Stomach (tissue), 19 donors: ENCODE measurements at regions of chr15 and their contacts with region 1.

Region 1: DNA sequence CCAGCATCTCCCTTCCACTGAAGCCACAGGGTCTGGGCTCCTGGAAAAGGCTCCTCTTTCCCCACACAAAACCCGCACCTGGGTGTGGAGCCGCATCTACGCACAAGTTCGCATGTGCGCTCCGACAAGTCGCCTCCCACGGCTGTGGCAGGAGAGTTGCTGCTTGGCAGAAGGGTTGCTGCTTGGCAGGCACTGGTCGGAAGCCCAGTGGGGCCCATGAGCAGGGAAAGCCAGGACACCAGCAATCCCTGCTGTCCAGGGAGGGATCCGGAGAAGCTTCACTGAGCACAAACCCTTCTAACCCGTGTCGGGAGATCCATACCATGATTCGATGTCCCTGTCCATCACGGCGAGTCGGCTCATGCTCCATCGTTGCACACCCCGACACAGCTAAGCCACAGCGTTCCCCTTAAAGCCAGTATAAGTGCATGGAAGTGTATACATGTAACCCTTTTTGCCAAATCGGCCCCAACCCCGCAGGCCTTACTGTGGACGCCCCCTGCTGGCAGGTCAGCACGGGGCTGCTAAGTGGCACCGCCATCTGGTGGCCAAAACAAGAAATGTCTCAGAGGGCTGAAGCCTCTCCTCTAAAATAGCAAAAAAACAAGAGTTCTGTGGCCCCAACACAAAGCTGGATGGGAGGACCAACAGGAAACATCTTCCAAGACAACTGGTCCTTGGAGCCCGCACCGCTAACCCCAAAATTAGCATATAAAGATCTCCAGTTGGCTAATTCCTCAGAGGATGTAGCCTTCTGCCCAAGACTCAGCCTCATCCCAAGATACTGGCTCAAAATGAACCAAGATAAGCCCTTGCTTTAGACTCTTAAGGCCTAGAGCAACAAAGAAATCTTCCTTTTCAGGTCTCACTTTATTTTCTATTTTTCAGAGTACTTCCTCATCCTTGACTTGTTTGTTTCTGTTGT is 8.3 kb downstream of the ANKRD63 start:
- DNase-seq: peak; percentile 87 to 91
- H3K4me3 ChIP-seq: no peak overlapping the region
- H3K27ac ChIP-seq: no peak overlapping the region
- H3K4me1 ChIP-seq: peaks cover 3 to 8% (median 6%) of the 10 kb centered on the region in 4 donors
- H3K27me3 ChIP-seq: peaks cover 2 to 23% (median 8%) of the 10 kb centered on the region in 3 donors
- CTCF ChIP-seq: peak in 6 of 7 experiments; percentile 49 to 100 (median 100)
- EP300 ChIP-seq: no peak
- POLR2A ChIP-seq: no peak

Region 2: GRCh38 chr15:40044717-40045571 is 229.7 kb before region 1 on chr15:
- intact Hi-C with region 1: loop called (anchors 5 kb)
- DNase-seq: peak; percentile 91 to 96
- H3K4me3 ChIP-seq: peak overlapping the region in 1 of 4 donors; percentile 6
- H3K27ac ChIP-seq: peak overlapping the region in 3 of 5 donors; percentile 40 to 76 (median 65)
- H3K4me1 ChIP-seq: peaks cover 15 to 58% (median 42%) of the 10 kb centered on the region in 4 donors
- H3K27me3 ChIP-seq: no peaks in the 10 kb centered on the region
- CTCF ChIP-seq: peak in 5 of 7 experiments; percentile 75 to 93 (median 89)
- EP300 ChIP-seq: no peak
- POLR2A ChIP-seq: no peak

Region 3: GRCh38 chr15:40219801-40220200 is 54.8 kb before region 1 on chr15:
- intact Hi-C with region 1: loop called (anchors 2 kb)
- DNase-seq: no peak
- H3K4me3 ChIP-seq: no peak overlapping the region
- H3K27ac ChIP-seq: no peak overlapping the region
- H3K4me1 ChIP-seq: peaks cover 0 to 3% (median 0%) of the 10 kb centered on the region in 4 donors
- H3K27me3 ChIP-seq: no peaks in the 10 kb centered on the region
- CTCF ChIP-seq: no peak
- EP300 ChIP-seq: no peak
- POLR2A ChIP-seq: no peak

Region 4: DNA sequence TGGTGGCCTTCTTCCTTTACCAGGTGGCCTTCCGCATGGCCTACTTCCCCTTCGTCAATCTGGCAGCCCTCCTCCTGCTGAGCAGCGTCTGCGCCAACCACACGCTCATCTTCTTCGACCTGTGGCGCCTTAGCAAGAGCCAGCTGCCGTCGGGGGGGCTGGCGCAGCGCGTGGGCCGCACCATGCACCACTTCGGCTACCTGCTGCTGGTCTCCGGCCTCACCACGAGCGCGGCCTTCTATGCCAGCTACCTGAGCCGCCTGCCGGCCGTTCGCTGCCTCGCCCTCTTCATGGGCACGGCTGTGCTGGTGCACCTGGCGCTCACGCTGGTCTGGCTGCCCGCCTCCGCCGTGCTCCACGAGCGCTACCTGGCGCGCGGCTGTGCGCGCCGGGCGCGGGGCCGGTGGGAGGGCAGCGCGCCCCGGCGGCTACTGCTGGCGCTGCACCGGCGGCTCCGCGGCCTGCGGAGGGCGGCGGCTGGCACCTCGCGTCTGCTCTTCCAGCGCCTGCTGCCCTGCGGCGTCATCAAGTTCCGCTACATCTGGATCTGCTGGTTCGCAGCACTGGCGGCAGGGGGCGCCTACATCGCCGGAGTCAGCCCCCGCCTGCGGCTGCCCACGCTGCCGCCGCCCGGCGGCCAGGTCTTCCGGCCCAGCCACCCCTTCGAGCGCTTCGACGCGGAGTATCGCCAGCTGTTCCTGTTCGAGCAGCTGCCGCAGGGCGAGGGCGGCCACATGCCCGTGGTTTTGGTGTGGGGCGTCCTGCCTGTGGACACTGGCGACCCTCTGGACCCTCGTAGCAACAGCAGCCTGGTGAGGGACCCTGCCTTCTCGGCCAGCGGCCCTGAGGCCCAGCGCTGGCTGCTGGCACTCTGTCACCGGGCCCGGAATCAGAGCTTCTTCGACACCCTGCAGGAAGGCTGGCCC is 93.3 kb after region 1 on chr15:
- intact Hi-C with region 1: no loop called
- DNase-seq: peak; percentile 93 to 97
- H3K4me3 ChIP-seq: peak overlapping the region; percentile 39 to 48 (median 44)
- H3K27ac ChIP-seq: peak overlapping the region; percentile 70 to 81 (median 76)
- H3K4me1 ChIP-seq: peaks cover 17 to 25% (median 23%) of the 10 kb centered on the region in 4 donors
- H3K27me3 ChIP-seq: no peaks in the 10 kb centered on the region
- CTCF ChIP-seq: peak in 5 of 7 experiments; percentile 45 to 90 (median 74)
- EP300 ChIP-seq: no peak
- POLR2A ChIP-seq: no peak

Region 5: DNA sequence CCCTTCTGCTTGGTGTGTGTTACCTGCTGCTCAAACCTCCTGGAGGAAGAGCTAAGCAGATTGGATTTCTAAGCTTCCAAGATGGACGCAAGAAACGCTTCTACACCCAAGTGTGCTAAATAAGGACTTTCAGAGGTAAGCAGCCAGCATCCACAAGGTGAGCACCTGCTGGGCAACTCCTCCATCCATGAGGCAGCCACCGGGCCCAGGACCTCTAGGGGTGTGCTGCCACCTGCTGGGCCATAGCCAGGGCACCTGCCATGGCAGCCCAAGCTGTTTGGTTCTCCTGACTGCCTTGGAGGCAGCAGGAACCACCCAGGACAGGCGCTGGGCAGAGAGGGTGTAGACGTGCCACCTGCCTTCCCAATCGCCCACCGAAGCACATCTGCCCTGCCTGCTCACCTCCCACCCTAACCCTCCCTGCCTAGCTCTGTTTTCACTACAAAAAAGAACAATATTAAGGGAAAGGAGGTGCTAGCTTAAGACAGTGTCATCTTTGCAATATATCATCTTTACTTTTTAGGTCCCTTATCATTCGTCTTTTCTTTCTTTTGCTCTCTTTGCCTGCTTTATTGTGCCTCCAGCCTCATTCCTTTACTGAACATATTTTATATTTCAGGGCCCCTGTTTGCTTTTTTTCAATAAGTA is 508.1 kb after region 1 on chr15:
- intact Hi-C with region 1: no loop called
- DNase-seq: peak; percentile 90 to 92
- H3K4me3 ChIP-seq: no peak overlapping the region
- H3K27ac ChIP-seq: no peak overlapping the region
- H3K4me1 ChIP-seq: peaks cover 24 to 37% (median 36%) of the 10 kb centered on the region in 4 donors
- H3K27me3 ChIP-seq: no peaks in the 10 kb centered on the region
- CTCF ChIP-seq: peak in 5 of 7 experiments; percentile 46 to 87 (median 74)
- EP300 ChIP-seq: no peak
- POLR2A ChIP-seq: no peak